H1 (cell line): ENCODE measurements at regions of chr14 and their contacts with region 1.

Region 1: GRCh38 chr14:72291908-72292688 is 359.9 kb downstream of the RGS6 start:
- DNase-seq: peak; percentile 1 to 52
- H3K4me3 ChIP-seq: no peak overlapping the region
- H3K27ac ChIP-seq: no peak overlapping the region
- H3K4me1 ChIP-seq: peaks cover 0 to 6% (median 0%) of the 10 kb centered on the region in 4 experiments; a peak in 1 of 7 replicates
- H3K27me3 ChIP-seq: no peaks in the 10 kb centered on the region
- CTCF ChIP-seq: peak in 2 of 3 experiments; percentile 66 to 68; a peak in 3 of 4 replicates
- EP300 ChIP-seq: no peak
- POLR2A ChIP-seq: no peak
- RAD21 ChIP-seq: peak; percentile 74 to 82

Region 2: GRCh38 chr14:72261068-72261467 is 31.0 kb before region 1 on chr14:
- CTCF ChIA-PET with region 1: no interaction called
- POLR2A ChIA-PET with region 1: no interaction called
- DNase-seq: no peak
- H3K4me3 ChIP-seq: no peak overlapping the region
- H3K27ac ChIP-seq: no peak overlapping the region
- H3K4me1 ChIP-seq: peaks cover 0 to 2% (median 0%) of the 10 kb centered on the region in 4 experiments; a peak in 1 of 7 replicates
- H3K27me3 ChIP-seq: no peaks in the 10 kb centered on the region
- CTCF ChIP-seq: no peak
- EP300 ChIP-seq: no peak
- POLR2A ChIP-seq: no peak
- RAD21 ChIP-seq: no peak

Region 3: DNA sequence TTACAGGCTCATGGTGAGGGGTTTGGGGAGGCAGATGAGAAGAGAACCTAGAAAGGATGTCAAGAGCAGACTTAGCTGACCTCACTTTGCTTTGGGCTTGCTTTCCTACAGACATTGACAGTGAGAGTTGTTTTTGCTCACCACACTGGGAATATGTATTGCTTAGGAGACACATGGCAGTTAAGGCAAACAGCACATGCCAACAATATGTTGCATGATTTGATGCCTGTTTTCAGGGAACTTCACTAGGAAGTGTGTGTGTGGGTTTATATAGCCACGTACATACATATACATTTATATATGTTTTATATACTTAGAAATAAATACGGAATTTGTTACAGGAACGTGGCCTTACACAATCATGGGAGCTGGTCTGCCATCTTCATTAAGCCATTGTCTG is 13.8 kb before region 1 on chr14:
- CTCF ChIA-PET with region 1: interaction called, 10 read pairs
- POLR2A ChIA-PET with region 1: no interaction called
- DNase-seq: no peak
- H3K4me3 ChIP-seq: no peak overlapping the region
- H3K27ac ChIP-seq: no peak overlapping the region
- H3K4me1 ChIP-seq: no peaks in the 10 kb centered on the region
- H3K27me3 ChIP-seq: no peaks in the 10 kb centered on the region
- CTCF ChIP-seq: no peak
- EP300 ChIP-seq: no peak
- POLR2A ChIP-seq: no peak
- RAD21 ChIP-seq: no peak